SK-MEL-5 (cell line): ENCODE measurements at regions of chr17 and their contacts with region 1.

Region 1: DNA sequence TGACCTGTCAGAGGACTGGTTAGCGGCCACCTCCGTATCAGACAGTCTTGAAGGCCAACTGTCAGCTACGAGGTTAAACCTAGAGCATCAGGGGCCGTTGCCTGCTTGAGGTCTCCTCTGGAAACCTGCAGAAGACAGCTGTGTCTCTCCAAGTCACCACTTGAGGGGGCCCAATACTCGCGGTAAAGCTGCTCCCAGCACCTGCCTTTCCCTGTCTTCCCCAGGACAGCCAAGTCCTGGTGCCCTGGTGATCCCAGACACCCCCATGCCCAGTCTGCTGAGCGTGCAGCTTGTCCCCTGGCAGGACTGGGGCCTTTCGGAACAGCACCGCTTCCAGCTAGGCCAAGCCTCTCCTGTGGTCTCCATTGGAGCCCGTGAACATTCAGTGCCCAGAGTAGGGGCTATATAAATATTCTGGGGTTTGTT is 80.1 kb downstream of the DNAH17 start:
- DNase-seq: peak; percentile 98

Region 2: GRCh38 chr17:78598013-78598471 is 100.9 kb after region 1 on chr17:
- in situ Hi-C with region 1: loop called (anchors 10 kb)
- DNase-seq: no peak

Region 3: GRCh38 chr17:78708510-78708973 is 211.4 kb after region 1 on chr17:
- in situ Hi-C with region 1: loop called (anchors 25 kb)
- DNase-seq: peak; percentile 96

Region 4: DNA sequence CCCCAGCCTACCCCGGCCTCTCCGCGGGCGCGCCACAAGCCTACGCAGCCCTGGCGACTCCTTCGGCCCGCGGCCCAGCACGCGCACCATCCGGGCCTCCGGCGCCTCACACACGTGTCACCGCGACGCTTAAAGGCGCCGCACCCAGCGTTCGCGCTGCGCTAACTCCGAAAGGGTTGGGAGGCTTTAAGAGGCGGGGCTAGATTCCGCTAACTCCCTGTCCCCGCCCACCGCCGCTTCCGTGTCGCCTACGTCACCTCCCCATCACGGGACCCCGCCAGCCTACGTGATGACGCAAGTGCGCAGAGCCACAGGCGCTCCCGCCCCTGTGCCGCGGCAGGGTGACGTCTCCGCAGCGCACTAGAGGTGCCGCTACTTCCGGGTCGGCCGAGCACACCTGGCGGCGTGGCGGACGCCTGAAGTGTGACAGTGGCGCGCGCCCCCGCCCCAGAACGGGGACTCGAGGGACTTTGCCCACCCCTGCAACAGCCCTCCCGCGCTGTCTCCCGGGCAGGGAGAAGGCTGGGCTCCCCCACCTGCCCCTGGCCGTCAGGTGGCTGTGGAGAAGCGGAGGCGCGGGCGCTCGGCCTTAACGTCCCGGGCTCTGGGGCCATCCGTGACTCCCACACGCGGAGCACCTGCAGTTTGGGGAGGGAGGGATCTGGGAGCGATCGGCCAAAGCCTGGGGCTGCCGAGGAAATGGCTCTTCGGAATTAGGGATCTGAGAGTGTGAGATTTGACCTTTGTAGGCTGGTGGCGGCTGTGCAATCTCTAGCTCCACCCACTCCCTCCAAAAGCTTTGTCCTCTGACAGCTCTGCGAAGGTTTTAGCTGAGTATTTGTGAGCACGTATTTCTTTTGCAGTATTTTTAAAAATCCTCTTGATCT is 343.8 kb after region 1 on chr17 and contains the start of gene USP36:
- in situ Hi-C with region 1: loop called (anchors 25 kb)
- DNase-seq: peak; percentile 100
- total RNA-seq, gene USP36: 96.8 and 116 TPM in 2 replicates